Activated naive CD4-positive, alpha-beta T cell treated with anti-CD3 and anti-CD28 coated beads for 36 hours (primary cell): ENCODE measurements at regions of chr4 and their contacts with region 1.

Region 1: GRCh38 chr4:73258686-73259570 is at the start of gene ANKRD17:
- DNase-seq: peak; percentile 93
- H3K4me3 Mint-ChIP-seq: peak within 1 kb of the TSS; percentile 98
- H3K27ac Mint-ChIP-seq: peak within 1 kb of the TSS; percentile 100
- H3K4me1 Mint-ChIP-seq: peaks cover 50% of the 10 kb centered on the region
- H3K27me3 Mint-ChIP-seq: no peaks in the 10 kb centered on the region
- total RNA-seq, gene ANKRD17: 42.3 to 44.2 TPM

Region 2: GRCh38 chr4:72701987-72702819 is 556.7 kb before region 1 on chr4:
- CTCF ChIA-PET with region 1: no interaction called
- intact Hi-C with region 1: loop called (anchors 1 kb)
- DNase-seq: peak; percentile 56
- H3K4me3 Mint-ChIP-seq: peak overlapping the region; percentile 68
- H3K27ac Mint-ChIP-seq: no peak overlapping the region
- H3K4me1 Mint-ChIP-seq: no peaks in the 10 kb centered on the region
- H3K27me3 Mint-ChIP-seq: peaks cover 2% of the 10 kb centered on the region

Region 3: DNA sequence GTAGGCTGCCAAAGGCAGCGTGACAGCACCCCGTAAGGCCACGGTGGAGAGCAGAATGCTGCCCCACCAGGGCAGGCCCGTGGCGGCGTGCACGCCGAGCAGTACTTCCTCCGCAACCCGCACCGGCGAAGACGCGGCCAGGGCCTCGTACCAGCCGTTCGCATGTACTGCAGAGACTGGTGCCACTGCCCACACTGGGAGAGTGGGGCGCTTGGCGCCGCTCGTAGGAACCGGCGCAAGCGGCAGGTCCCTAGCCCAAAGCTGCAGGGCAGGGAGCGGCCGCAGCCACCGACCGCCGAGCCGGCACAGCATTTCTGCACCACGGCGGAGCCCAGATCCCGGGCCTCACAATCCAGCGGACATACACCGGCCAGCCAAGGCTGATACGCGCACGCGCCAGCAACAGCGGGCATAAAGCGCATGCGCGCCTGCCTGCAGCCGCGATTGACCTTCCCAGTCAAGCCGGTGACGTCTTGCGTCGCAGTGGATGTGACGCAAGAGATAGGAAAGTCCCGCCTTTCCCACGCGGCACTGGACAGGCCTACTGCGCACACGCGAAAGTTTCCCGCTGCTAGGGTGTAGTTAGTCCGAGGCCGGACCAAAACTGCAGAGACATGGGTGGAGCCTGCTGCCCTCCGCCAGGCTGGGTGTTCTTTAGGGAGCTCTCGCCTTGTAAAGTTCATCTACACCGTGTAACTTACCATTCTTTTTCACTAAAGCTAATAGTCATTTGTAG is 189.4 kb before region 1 on chr4 and contains the start of gene COX18:
- CTCF ChIA-PET with region 1: interaction called, 8 read pairs
- intact Hi-C with region 1: loop called (anchors 1 kb)
- DNase-seq: peak; percentile 97
- H3K4me3 Mint-ChIP-seq: peak within 1 kb of the TSS; percentile 72
- H3K27ac Mint-ChIP-seq: peak within 1 kb of the TSS; percentile 93
- H3K4me1 Mint-ChIP-seq: peaks cover 24% of the 10 kb centered on the region
- H3K27me3 Mint-ChIP-seq: no peaks in the 10 kb centered on the region
- total RNA-seq, gene COX18: 20.9 to 21.1 TPM

Region 4: DNA sequence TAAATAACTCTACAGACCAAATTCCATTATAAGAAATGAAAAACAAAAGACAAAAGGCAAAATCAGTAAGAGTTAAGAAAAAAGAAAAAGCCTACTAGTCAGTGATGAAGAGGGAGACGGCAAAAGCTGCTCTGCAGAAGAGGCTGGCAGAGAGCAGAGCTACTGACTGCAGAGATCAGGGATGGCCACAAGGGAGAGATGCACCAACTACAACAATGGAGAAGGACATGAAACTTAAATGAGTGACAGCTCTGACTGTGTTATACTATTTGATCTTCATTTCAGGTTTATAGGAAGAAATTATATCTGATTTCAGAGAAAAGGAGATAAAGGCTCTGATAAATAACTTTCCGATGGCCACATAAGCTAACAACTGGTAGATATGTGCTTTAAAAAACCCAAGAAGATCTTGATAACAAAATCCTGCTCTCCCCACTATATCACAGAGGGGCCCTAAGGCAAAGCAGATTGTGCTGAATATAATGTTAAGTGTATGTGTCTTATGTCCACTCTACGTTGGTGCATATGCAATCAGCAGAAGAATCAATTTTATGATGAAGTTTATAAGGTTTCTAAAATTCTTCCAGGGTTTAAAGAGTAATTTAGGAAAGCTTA is 131.0 kb before region 1 on chr4:
- CTCF ChIA-PET with region 1: interaction called, 11 read pairs
- intact Hi-C with region 1: loop called (anchors 1 kb)
- DNase-seq: peak; percentile 15
- H3K4me3 Mint-ChIP-seq: no peak overlapping the region
- H3K27ac Mint-ChIP-seq: no peak overlapping the region
- H3K4me1 Mint-ChIP-seq: no peaks in the 10 kb centered on the region
- H3K27me3 Mint-ChIP-seq: no peaks in the 10 kb centered on the region

Region 5: GRCh38 chr4:73245955-73246354 is 13.0 kb before region 1 on chr4:
- CTCF ChIA-PET with region 1: interaction called, 6 read pairs
- intact Hi-C with region 1: loop called (anchors 2 kb)
- DNase-seq: no peak
- H3K4me3 Mint-ChIP-seq: no peak overlapping the region
- H3K27ac Mint-ChIP-seq: peak overlapping the region; percentile 74
- H3K4me1 Mint-ChIP-seq: peaks cover 64% of the 10 kb centered on the region
- H3K27me3 Mint-ChIP-seq: no peaks in the 10 kb centered on the region

Region 6: DNA sequence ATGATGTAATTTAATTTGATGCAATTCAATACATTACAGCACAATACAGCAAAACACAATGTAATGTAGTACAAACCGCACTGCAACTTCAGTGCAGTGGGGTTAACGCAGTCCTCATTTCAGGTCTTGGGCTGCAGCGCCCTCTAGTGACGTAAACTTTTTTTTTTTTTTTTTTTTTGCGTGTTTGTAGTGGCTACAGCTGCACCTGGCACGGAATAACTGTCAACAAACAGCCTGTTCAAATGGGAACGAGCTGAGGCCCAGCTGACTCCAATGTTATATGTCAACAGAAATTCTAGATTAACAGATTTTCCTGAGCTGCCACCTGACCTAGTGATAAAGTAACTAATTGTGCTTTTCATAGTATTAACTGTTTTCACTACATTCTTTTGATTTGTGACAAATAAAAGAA is 394.8 kb after region 1 on chr4:
- CTCF ChIA-PET with region 1: no interaction called
- intact Hi-C with region 1: loop called (anchors 5 kb)
- DNase-seq: peak; percentile 11
- H3K4me3 Mint-ChIP-seq: no peak overlapping the region
- H3K27ac Mint-ChIP-seq: no peak overlapping the region
- H3K4me1 Mint-ChIP-seq: no peaks in the 10 kb centered on the region
- H3K27me3 Mint-ChIP-seq: peaks cover 10% of the 10 kb centered on the region